Dorsolateral prefrontal cortex (tissue), 120 donors: ENCODE measurements at regions of chr18 and their contacts with region 1.

Region 1: GRCh38 chr18:26648509-26649192 is 100.3 kb upstream of the KCTD1 start:
- DNase-seq: no peak
- H3K4me3 ChIP-seq: no peak overlapping the region
- H3K27ac ChIP-seq: peak overlapping the region in 53 of 59 donors; percentile 51 to 99 (median 94)
- H3K27me3 ChIP-seq: no peaks in the 10 kb centered on the region
- CTCF ChIP-seq: no peak

Region 2: DNA sequence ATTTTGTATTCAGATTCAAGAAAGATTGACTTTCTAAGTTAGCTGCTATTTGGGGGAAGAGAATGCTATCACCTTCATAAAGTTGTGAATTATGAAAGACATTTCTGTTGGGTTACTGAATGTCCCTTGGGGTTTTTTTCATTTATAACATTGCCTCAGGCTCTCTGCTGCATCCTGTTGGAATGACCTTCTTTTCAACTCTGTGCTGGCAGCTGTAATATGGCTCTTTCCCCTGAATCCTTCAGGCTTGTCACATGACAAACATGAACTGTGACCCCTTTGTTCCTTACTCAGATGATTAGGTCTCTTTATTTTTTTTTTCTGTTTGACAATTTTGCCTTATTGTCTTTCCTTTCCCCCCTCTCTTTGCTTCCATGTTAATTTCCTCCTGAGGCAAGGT is 262.6 kb before region 1 on chr18:
- intact Hi-C with region 1: loop called in 1 of 2 experiments (anchors 5 kb)
- DNase-seq: no peak
- H3K4me3 ChIP-seq: no peak overlapping the region
- H3K27ac ChIP-seq: peak overlapping the region in 35 of 59 donors; percentile 3 to 71 (median 24)
- H3K27me3 ChIP-seq: no peaks in the 10 kb centered on the region
- CTCF ChIP-seq: peak in 5 of 56 donors; percentile 11 to 26 (median 13)

Region 3: DNA sequence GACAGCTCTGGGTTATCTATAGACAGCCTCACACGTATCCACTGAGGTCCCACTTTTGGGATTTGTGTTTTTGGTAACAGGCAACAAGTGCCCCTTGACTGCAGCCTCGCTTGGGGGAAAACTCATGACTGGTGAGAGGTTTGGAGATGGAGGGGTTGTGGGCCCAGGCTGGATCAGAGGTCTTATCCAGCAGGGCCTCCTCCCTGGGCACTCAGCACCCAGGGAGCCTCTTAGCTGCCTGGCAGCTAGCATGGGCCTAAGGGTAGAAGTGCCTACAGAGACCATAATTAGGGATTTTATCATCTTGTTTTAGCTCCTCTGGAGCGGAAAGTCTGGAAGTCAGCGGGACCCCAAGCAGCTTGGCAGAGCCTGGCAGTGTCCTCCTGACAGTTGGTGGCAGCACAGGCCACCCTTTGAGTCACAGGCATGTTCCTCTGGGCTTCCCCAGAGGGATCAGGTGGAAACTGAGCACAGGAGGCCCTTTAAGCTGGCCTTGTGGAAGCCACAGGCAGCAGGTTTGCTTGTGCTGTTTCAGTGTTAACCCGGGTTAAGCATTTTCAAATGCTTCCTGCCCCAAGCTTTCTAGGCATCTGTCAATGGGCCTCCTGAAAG is 243.4 kb before region 1 on chr18:
- intact Hi-C with region 1: loop called in 1 of 2 experiments (anchors 5 kb)
- DNase-seq: peak; percentile 33 to 76 (median 54)
- H3K4me3 ChIP-seq: no peak overlapping the region
- H3K27ac ChIP-seq: no peak overlapping the region
- H3K27me3 ChIP-seq: no peaks in the 10 kb centered on the region
- CTCF ChIP-seq: peak in 54 of 56 donors; percentile 9 to 79 (median 56)

Region 4: GRCh38 chr18:26621161-26622026 is 27.3 kb before region 1 on chr18:
- intact Hi-C with region 1: loop called in 1 of 2 experiments (anchors 2 kb)
- DNase-seq: peak in 5 of 10 donors; percentile 39 to 67 (median 57)
- H3K4me3 ChIP-seq: no peak overlapping the region
- H3K27ac ChIP-seq: peak overlapping the region in 1 of 59 donors; percentile 33
- H3K27me3 ChIP-seq: no peaks in the 10 kb centered on the region
- CTCF ChIP-seq: peak; percentile 14 to 84 (median 65)